Endothelial cell of umbilical vein (primary cell): ENCODE measurements at regions of chr2 and their contacts with region 1.

Region 1: DNA sequence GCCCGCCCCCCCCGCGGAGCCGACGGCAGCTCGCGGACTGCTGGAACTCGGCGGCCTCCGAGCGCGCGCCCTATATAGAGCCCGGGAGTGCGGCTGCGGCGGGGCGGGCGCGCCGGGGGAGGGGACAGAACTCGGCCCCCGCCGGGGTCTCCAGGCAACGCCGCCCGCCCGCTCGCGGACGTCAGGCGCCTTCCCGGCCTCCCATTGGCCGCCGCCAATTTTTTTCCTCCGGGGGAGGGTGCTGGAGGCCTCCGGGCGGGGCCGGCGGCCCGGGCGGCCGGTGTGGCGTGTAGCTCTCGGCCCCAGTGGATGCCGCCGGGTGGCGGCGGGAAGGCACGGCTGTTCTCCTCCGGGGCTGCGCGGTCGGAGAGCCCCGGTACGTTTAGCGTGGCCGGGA is at the start of gene ZFP36L2:
- DNase-seq: peak; percentile 91
- H3K4me3 ChIP-seq: peak within 1 kb of the TSS; percentile 71 to 93 (median 90)
- H3K27ac ChIP-seq: peak within 1 kb of the TSS; percentile 88
- H3K4me1 ChIP-seq: peaks cover 31% of the 10 kb centered on the region
- H3K27me3 ChIP-seq: no peaks in the 10 kb centered on the region
- CTCF ChIP-seq: no peak
- POLR2A ChIP-seq: peak; percentile 99
- total RNA-seq, gene ZFP36L2: 73.4 and 75.9 TPM in 2 replicates

Region 2: DNA sequence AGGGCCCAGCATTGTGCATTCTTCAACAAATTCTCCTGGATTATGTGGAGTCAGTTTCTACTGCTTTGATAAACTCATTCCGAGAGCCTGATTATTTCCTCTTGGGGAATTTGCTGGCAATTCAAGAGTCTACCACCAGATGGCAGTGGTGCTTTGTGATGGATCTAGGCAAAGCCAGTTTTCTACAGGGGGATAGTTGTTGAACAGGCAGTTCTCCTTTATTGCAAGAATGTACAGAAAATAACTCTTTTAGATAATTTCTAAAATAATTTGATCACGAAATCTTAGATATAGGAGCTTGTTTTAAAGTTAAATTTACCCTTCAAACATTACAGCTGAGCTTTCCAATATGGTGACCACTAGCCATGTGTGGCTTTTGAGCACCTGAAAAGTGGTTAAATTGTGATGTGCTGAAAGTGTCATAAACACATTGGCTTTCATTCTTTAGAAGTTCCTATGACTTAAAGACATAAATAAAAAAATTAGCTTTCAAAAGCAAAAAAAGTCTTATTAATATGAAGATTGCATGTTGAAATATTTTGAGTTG is 367.5 kb before region 1 on chr2:
- CTCF ChIA-PET with region 1: interaction called, 30 read pairs
- POLR2A ChIA-PET with region 1: no interaction called
- dilution Hi-C with region 1: no loop called
- intact Hi-C with region 1: loop called (anchors 1 kb)
- DNase-seq: peak; percentile 90
- H3K4me3 ChIP-seq: no peak overlapping the region
- H3K27ac ChIP-seq: no peak overlapping the region
- H3K4me1 ChIP-seq: peaks cover 19% of the 10 kb centered on the region
- H3K27me3 ChIP-seq: no peaks in the 10 kb centered on the region
- CTCF ChIP-seq: peak; percentile 75 to 78
- POLR2A ChIP-seq: no peak

Region 3: DNA sequence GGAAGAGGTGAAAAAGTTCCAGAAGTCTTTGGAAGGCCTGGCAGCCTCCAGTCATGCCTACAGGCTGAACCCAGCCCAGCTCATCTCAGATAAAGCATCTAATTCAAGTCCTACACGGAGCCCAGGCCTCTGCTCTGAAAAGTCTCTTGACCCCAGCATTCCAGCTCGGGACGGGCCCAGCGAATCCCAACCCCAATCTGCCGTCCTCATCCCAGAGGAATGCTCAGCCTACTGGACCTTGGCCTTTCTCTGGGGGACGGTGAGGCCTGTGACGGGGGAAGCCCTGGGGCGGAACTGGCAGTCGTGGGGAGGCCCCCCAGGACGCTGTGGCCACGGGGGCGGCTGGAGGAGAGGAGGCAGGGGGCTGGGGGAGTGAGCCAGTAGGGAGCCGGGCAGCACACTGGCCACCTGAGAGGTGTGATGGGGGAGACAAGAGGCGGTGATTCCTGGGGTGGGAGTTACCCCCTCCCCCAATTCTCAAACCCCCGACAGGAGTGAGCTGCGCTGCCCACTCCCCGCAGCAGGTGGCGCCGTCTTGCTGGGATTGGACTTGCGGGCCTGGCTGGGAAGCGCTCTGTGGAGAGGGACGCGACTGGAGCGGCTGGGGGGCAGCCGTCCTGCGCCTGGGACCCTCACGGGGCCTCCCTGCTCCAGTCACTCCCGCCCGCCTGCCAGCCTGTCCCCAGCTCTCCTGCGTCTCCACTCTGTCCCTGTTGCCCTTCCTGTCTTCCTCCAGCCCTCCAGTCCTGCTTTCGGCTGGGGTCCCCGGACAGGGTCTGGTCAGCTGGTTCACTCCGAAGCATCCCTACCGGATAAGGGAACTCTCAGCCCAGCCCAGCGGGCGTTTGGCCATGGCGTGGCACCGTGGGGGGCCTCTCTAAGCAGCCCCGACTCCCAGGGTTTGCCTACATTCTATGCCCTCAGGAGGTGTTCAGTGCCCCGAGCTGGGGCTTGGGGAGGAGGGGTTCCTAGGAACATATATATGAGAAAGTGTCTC is 251.5 kb before region 1 on chr2:
- CTCF ChIA-PET with region 1: interaction called, 240 read pairs
- POLR2A ChIA-PET with region 1: interaction called, 9 read pairs
- dilution Hi-C with region 1: no loop called
- intact Hi-C with region 1: loop called (anchors 1 kb)
- DNase-seq: peak; percentile 66
- H3K4me3 ChIP-seq: peak overlapping the region in 2 of 3 experiments; percentile 21 to 44
- H3K27ac ChIP-seq: no peak overlapping the region
- H3K4me1 ChIP-seq: peaks cover 4% of the 10 kb centered on the region
- H3K27me3 ChIP-seq: no peaks in the 10 kb centered on the region
- CTCF ChIP-seq: peak; percentile 81 to 95
- POLR2A ChIP-seq: no peak

Region 4: GRCh38 chr2:43169987-43170386 is 56.6 kb before region 1 on chr2:
- CTCF ChIA-PET with region 1: interaction called, 71 read pairs
- POLR2A ChIA-PET with region 1: interaction called, 16 read pairs
- dilution Hi-C with region 1: loop called (anchors 10 kb)
- intact Hi-C with region 1: loop called (anchors 1 kb)
- DNase-seq: peak; percentile 59
- H3K4me3 ChIP-seq: no peak overlapping the region
- H3K27ac ChIP-seq: peak overlapping the region; percentile 88
- H3K4me1 ChIP-seq: peaks cover 47% of the 10 kb centered on the region
- H3K27me3 ChIP-seq: no peaks in the 10 kb centered on the region
- CTCF ChIP-seq: peak; percentile 76 to 78
- POLR2A ChIP-seq: no peak

Region 5: DNA sequence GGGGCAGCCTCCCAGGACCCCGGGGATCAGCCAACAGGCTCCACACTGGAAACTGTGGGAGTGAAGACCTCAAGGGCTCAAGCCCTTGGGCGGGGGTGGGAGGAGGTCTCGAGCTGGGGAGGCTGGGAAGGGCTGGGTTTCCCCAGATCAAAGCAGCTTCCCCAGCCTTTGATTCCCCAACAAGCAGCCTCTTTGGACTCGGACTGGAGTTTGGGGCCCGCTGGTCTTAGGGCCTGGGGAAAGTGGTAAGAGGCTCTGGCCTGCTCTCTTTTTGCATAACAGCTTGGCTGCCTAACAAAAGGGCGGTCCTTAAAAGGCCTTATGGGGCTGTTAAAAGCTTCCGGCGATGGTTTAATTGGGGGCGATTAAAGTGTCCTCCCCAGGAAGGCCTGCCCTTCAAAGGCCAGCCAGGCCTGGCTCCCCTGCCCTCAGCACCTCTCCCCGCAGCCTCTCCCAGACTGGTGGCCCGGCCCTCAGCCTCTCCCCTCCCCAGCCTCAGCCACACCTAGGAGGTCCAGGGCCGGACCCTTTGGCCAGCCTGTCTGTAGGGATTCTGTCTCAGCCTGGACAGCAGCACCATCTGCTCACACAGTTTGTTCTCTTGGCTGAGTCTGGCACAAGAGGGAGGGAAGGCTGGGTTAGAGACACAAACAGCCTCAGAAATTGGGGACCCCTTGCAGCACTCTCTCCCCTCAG is 39.7 kb before region 1 on chr2:
- CTCF ChIA-PET with region 1: no interaction called
- POLR2A ChIA-PET with region 1: no interaction called
- dilution Hi-C with region 1: no loop called
- intact Hi-C with region 1: no loop called
- DNase-seq: no peak
- H3K4me3 ChIP-seq: no peak overlapping the region
- H3K27ac ChIP-seq: no peak overlapping the region
- H3K4me1 ChIP-seq: peaks cover 11% of the 10 kb centered on the region
- H3K27me3 ChIP-seq: no peaks in the 10 kb centered on the region
- CTCF ChIP-seq: no peak
- POLR2A ChIP-seq: no peak

Region 6: GRCh38 chr2:43542285-43542937 is 315.9 kb after region 1 on chr2:
- CTCF ChIA-PET with region 1: interaction called, 30 read pairs
- POLR2A ChIA-PET with region 1: no interaction called
- dilution Hi-C with region 1: no loop called
- intact Hi-C with region 1: loop called (anchors 1 kb)
- DNase-seq: peak; percentile 66
- H3K4me3 ChIP-seq: no peak overlapping the region
- H3K27ac ChIP-seq: no peak overlapping the region
- H3K4me1 ChIP-seq: no peaks in the 10 kb centered on the region
- H3K27me3 ChIP-seq: no peaks in the 10 kb centered on the region
- CTCF ChIP-seq: peak in 1 of 2 donors; percentile 17
- POLR2A ChIP-seq: no peak